ENCODE measurements at regions of chr12 and their contacts with region 1.

Region 1: DNA sequence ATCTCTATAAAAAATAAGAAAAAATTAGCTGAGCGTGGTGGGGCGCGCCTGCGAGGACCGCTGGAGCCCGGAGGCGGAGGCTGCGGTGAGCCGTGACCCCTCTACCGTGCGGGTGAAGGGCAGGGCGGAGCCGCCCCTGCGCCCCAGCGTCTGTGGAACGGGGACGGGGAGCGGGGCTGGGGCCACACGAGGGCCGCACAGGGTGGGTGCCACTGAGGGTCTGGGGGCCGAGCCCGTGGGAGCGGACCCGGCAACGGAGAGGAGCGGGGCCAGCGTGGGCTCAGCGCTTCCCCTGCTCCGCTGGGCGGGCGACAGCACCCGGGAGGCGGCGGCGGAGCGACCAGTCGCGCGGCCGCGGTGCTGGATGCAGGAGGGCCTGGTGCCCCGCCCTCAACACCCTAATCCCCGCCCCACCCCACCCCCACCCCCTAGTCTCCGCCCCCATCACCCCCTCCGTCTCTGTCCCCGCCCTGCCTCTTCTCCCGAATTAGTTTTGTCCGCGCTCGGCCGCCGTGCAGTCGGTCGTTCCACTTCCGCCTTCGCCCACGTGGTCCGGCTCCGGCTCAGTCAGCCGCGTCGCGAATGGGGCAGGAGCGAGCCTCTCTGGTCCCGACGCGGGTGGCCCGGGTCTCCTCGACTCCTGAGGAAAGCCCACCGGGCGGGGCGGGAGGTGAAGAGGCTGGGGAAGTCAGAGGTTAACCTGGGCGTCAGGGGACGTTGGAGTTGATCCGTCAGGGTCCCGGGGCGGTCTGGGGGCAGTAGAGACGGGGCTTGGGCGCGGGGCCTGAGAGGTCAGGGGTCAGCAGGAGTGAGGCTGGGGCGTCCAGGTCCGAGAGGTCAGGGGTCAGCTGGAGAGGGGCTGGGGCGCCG is at the start of gene PUS1:
- DNase-seq: peak; percentile 92 to 95
- H3K4me3 ChIP-seq: peak within 1 kb of the TSS; percentile 60 to 86 (median 62)
- H3K27ac ChIP-seq: peak within 1 kb of the TSS; percentile 49 to 86 (median 64)
- H3K4me1 ChIP-seq: peaks cover 7 to 12% of the 10 kb centered on the region in 2 donors
- H3K27me3 ChIP-seq: no peaks in the 10 kb centered on the region
- CTCF ChIP-seq: no peak
- POLR2A ChIP-seq: peak in 1 of 2 donors; percentile 59
- total RNA-seq, gene PUS1: 10.9 to 23.6 (median 16.4) TPM

Region 2: GRCh38 chr12:131710464-131711457 is 218.2 kb before region 1 on chr12 and contains the start of gene SFSWAP:
- intact Hi-C with region 1: no loop called
- DNase-seq: peak; percentile 65 to 70
- H3K4me3 ChIP-seq: peak within 1 kb of the TSS; percentile 90 to 99 (median 94)
- H3K27ac ChIP-seq: peak within 1 kb of the TSS; percentile 91 to 96 (median 95)
- H3K4me1 ChIP-seq: peaks cover 16 to 18% of the 10 kb centered on the region in 2 donors
- H3K27me3 ChIP-seq: no peaks in the 10 kb centered on the region
- CTCF ChIP-seq: no peak
- POLR2A ChIP-seq: peak in 1 of 2 donors; percentile 57
- total RNA-seq, gene SFSWAP: 36.4 to 50.8 (median 42.6) TPM

Region 3: DNA sequence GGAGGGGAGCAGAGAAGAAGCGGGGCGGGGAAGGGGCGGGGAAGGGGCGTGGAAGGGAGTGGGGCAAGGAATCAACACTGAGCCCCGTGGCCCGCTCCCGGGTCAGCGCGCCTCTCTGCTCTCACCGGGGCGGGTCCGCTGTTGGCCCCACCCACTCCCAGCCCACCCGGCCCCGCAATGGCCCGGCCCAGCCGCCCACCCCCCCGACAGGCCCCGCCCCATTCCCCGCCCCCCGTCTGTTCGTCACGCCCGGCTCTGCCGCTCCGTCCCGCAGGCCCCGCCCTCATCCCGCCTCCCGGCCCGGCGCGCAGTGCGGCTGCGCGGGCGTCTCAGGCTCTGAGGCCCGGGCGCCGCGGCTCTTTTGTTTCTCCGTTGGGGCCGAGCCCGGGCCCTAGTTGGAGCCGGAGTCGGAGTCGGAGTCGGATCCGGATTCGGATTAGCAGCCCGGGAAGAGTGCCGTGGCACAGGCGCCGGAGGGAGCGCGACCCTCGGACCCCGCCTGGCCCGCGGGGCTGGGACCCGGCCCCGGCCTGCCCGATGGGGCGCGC is 34.6 kb before region 1 on chr12 and contains the start of gene ULK1:
- intact Hi-C with region 1: loop called (anchors 2 kb)
- DNase-seq: peak; percentile 92 to 93
- H3K4me3 ChIP-seq: peak within 1 kb of the TSS; percentile 60 to 64 (median 62)
- H3K27ac ChIP-seq: peak within 1 kb of the TSS; percentile 89 to 99 (median 98)
- H3K4me1 ChIP-seq: peaks cover 16 to 19% of the 10 kb centered on the region in 2 donors
- H3K27me3 ChIP-seq: no peaks in the 10 kb centered on the region
- CTCF ChIP-seq: no peak
- POLR2A ChIP-seq: peak; percentile 73 to 95
- total RNA-seq, gene ULK1: 21.1 to 27.7 (median 21.7) TPM

Measured in thyroid gland (tissue), 4 donors.